CD4-positive, alpha-beta memory T cell (primary cell): ENCODE measurements at regions of chr2 and their contacts with region 1.

Region 1: DNA sequence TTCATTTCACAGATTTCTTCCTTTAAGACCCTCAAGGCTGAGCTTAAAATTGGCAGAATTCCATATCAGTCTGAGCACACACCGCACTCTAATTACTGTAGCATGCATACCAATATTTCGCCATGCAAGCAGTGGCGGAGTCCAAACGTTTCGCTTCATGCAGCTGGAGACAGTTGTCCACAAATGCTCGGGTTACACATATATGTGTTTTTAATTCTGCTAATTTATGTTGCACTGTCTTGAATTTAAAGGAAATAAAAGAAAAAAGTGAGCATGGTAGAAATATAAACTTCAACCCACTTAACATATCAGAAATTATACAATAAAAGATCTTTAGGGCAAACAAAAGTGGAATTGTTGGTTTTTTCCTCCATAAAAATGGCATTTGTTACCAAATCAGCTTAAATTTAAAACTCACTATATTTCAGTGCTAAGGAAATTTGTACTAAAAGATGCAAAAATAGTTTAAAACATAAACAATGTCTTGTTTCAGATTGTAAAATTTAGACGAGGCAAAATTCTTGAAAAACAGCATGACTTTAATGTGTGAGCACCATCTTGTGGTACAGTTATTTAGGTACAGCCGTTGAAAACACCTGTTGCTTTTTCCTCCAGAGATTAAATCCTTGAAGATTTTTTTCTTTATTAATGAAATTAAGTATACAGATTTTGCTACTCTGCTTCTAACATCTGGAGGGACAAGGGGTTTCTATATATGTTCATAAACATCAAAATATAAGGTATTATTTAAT is 24.1 kb upstream of the KANSL1L start:
- DNase-seq: peak in 4 of 5 donors; percentile 29 to 45 (median 41)
- H3K4me3 ChIP-seq: no peak overlapping the region
- H3K4me3 Mint-ChIP-seq: no peak overlapping the region
- H3K27ac ChIP-seq: no peak overlapping the region
- H3K27ac Mint-ChIP-seq: no peak overlapping the region
- H3K4me1 ChIP-seq: no peaks in the 10 kb centered on the region
- H3K4me1 Mint-ChIP-seq: no peaks in the 10 kb centered on the region
- H3K27me3 ChIP-seq: peaks cover 5% of the 10 kb centered on the region
- H3K27me3 Mint-ChIP-seq: peaks cover 2 to 8% of the 10 kb centered on the region in 2 donors

Region 2: GRCh38 chr2:208373460-208374089 is 1821.7 kb before region 1 on chr2:
- CTCF ChIA-PET with region 1: no interaction called
- POLR2A ChIA-PET with region 1: no interaction called
- intact Hi-C with region 1: loop called (anchors 1 kb)
- DNase-seq: peak in 4 of 5 donors; percentile 6 to 13 (median 9)
- H3K4me3 ChIP-seq: no peak overlapping the region
- H3K4me3 Mint-ChIP-seq: no peak overlapping the region
- H3K27ac ChIP-seq: no peak overlapping the region
- H3K27ac Mint-ChIP-seq: no peak overlapping the region
- H3K4me1 ChIP-seq: no peaks in the 10 kb centered on the region
- H3K4me1 Mint-ChIP-seq: no peaks in the 10 kb centered on the region
- H3K27me3 ChIP-seq: no peaks in the 10 kb centered on the region
- H3K27me3 Mint-ChIP-seq: peaks cover 1 to 10% of the 10 kb centered on the region in 2 donors

Region 3: GRCh38 chr2:208466151-208466919 is 1728.9 kb before region 1 on chr2:
- CTCF ChIA-PET with region 1: no interaction called
- POLR2A ChIA-PET with region 1: no interaction called
- intact Hi-C with region 1: loop called (anchors 5 kb)
- DNase-seq: no peak
- H3K4me3 ChIP-seq: no peak overlapping the region
- H3K4me3 Mint-ChIP-seq: no peak overlapping the region
- H3K27ac ChIP-seq: no peak overlapping the region
- H3K27ac Mint-ChIP-seq: no peak overlapping the region
- H3K4me1 ChIP-seq: no peaks in the 10 kb centered on the region
- H3K4me1 Mint-ChIP-seq: no peaks in the 10 kb centered on the region
- H3K27me3 ChIP-seq: no peaks in the 10 kb centered on the region
- H3K27me3 Mint-ChIP-seq: no peaks in the 10 kb centered on the region

Region 4: DNA sequence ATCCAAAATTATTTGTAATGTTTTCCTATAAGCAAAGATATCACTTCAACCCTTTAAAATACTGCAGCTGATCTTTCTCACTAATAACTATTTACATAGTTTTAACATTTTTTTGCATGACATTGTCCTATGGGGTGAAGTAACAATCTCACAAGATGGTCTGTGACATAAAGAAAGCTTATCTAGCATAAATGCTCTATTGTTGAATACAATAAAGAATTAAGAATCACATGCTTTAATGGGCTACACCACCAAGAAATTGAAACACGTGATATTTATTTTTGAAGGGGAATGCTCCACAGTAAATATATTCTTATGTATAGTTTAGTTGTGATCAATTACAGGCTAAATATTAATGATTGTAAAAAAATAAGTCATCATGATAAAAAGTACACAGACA is 1347.6 kb before region 1 on chr2:
- CTCF ChIA-PET with region 1: no interaction called
- POLR2A ChIA-PET with region 1: no interaction called
- intact Hi-C with region 1: no loop called
- DNase-seq: no peak
- H3K4me3 ChIP-seq: no peak overlapping the region
- H3K4me3 Mint-ChIP-seq: no peak overlapping the region
- H3K27ac ChIP-seq: no peak overlapping the region
- H3K27ac Mint-ChIP-seq: no peak overlapping the region
- H3K4me1 ChIP-seq: no peaks in the 10 kb centered on the region
- H3K4me1 Mint-ChIP-seq: no peaks in the 10 kb centered on the region
- H3K27me3 ChIP-seq: no peaks in the 10 kb centered on the region
- H3K27me3 Mint-ChIP-seq: no peaks in the 10 kb centered on the region

Region 5: DNA sequence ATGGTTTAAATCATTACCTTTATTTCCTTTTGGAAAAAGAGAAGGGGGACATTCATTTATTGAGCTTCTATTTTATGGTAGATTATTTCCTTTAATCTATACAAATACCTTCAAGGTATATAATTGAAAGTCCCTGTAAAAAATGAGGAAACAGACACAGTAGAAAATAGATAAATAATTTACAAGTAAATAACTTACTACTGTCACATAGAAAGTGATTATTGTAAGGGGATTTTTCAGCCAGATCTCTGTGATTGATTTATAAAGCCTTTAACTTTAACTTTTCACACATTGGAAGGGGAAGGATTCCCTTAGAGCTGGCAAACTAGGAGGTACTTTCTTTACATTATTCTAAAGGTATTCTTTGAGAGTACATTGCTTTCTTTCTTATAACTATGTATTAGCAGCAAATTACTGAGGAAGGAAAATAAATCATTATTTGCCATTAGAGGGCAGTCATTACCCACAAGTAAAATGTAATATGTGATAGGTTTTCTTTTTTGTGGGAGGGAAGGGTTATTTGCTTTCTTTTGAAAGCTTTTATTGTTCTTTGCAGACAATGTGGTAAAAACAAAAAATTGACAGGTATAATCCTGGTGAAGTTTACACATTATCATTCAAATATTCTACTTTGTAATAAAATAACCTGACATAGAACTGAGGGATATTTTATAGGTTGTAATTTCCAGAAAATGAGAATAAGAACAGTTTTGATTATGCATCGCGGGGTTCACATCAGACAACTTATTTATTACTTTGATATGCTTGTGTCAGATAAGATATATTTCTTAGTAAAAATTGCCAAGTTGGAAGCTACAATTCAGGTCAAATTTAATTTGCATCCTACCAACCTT is 217.7 kb before region 1 on chr2:
- CTCF ChIA-PET with region 1: interaction called, 190 read pairs
- POLR2A ChIA-PET with region 1: no interaction called
- intact Hi-C with region 1: loop called (anchors 1 kb)
- DNase-seq: peak in 4 of 5 donors; percentile 35 to 52 (median 43)
- H3K4me3 ChIP-seq: no peak overlapping the region
- H3K4me3 Mint-ChIP-seq: no peak overlapping the region
- H3K27ac ChIP-seq: no peak overlapping the region
- H3K27ac Mint-ChIP-seq: no peak overlapping the region
- H3K4me1 ChIP-seq: no peaks in the 10 kb centered on the region
- H3K4me1 Mint-ChIP-seq: no peaks in the 10 kb centered on the region
- H3K27me3 ChIP-seq: no peaks in the 10 kb centered on the region
- H3K27me3 Mint-ChIP-seq: peaks cover 4 to 9% of the 10 kb centered on the region in 2 donors

Region 6: GRCh38 chr2:209986415-209986814 is 208.9 kb before region 1 on chr2:
- CTCF ChIA-PET with region 1: interaction called, 190 read pairs
- POLR2A ChIA-PET with region 1: no interaction called
- intact Hi-C with region 1: no loop called
- DNase-seq: no peak
- H3K4me3 ChIP-seq: no peak overlapping the region
- H3K4me3 Mint-ChIP-seq: no peak overlapping the region
- H3K27ac ChIP-seq: no peak overlapping the region
- H3K27ac Mint-ChIP-seq: no peak overlapping the region
- H3K4me1 ChIP-seq: no peaks in the 10 kb centered on the region
- H3K4me1 Mint-ChIP-seq: no peaks in the 10 kb centered on the region
- H3K27me3 ChIP-seq: peaks cover 5% of the 10 kb centered on the region
- H3K27me3 Mint-ChIP-seq: peaks cover 11 to 21% of the 10 kb centered on the region in 2 donors

Region 7: DNA sequence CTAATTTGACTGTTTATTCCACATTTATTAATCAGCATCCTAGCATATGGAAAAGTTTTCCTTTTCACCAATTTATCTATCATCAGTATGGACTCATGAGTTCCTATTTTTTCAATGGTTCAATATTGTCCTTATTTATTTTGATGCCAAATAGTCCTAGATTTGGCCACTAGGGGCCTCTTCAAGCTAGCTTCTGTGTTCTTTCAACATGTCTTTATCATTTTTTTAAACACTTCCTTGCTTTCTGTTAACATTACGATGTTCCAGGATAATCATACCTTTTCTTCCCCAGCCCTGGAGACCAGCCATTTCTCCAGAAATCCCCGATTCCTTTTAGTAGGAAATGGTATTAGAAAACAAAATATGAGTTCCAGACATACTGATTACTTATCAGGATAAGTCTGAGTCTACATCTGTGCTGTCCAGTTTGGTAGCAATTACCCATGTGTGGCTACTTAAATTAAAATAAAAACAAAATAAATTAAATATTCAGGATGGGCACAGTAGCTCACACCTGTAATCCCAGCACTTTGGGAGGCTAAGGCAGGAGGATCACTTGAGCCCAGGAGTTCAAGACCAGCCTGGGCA is 122.3 kb before region 1 on chr2:
- CTCF ChIA-PET with region 1: interaction called, 10 read pairs
- POLR2A ChIA-PET with region 1: no interaction called
- intact Hi-C with region 1: loop called (anchors 1 kb)
- DNase-seq: peak in 1 of 5 donors; percentile 1
- H3K4me3 ChIP-seq: no peak overlapping the region
- H3K4me3 Mint-ChIP-seq: no peak overlapping the region
- H3K27ac ChIP-seq: no peak overlapping the region
- H3K27ac Mint-ChIP-seq: no peak overlapping the region
- H3K4me1 ChIP-seq: no peaks in the 10 kb centered on the region
- H3K4me1 Mint-ChIP-seq: no peaks in the 10 kb centered on the region
- H3K27me3 ChIP-seq: no peaks in the 10 kb centered on the region
- H3K27me3 Mint-ChIP-seq: no peaks in the 10 kb centered on the region